Naive thymus-derived CD4-positive, alpha-beta T cell (primary cell): ENCODE measurements at regions of chr4 and their contacts with region 1.

Region 1: GRCh38 chr4:10461091-10461849 is 4.0 kb upstream of the ZNF518B start:
- DNase-seq: peak; percentile 52 to 90 (median 80)
- ATAC-seq: peak; percentile 89
- H3K4me3 ChIP-seq: peak overlapping the region; percentile 61
- H3K4me3 Mint-ChIP-seq: peak overlapping the region; percentile 77 to 92 (median 86)
- H3K27ac ChIP-seq: no peak overlapping the region
- H3K27ac Mint-ChIP-seq: peak overlapping the region in 4 of 9 donors; percentile 3 to 85 (median 45)
- H3K4me1 ChIP-seq: peaks cover 4 to 6% of the 10 kb centered on the region in 2 donors
- H3K4me1 Mint-ChIP-seq: peaks cover 14 to 38% (median 30%) of the 10 kb centered on the region in 7 donors
- H3K27me3 ChIP-seq: no peaks in the 10 kb centered on the region
- H3K27me3 Mint-ChIP-seq: peaks cover 21 to 43% (median 34%) of the 10 kb centered on the region in 5 donors

Region 2: DNA sequence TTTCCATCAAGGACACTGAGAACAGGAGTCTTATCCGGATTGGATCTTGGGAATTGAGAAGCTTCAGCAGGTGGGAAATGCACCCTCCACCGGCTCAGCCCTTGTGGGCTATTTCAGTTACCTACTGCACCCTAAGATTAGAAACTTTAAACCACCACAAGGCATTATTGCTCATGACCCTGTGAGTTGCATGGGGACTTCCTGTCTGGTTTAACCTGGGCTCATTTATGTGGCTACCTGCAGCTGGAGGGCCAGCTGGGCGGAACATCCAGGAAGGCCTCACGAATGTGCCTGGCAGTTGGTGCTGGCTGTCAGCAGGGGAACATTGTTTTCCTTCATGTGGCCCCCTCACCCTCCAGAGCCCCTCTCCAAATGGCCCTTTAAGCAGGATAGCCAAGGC is 853.0 kb before region 1 on chr4:
- CTCF ChIA-PET with region 1: no interaction called
- POLR2A ChIA-PET with region 1: no interaction called
- intact Hi-C with region 1: loop called (anchors 5 to 10 kb)
- DNase-seq: no peak
- ATAC-seq: no peak
- H3K4me3 ChIP-seq: no peak overlapping the region
- H3K4me3 Mint-ChIP-seq: no peak overlapping the region
- H3K27ac ChIP-seq: no peak overlapping the region
- H3K27ac Mint-ChIP-seq: no peak overlapping the region
- H3K4me1 ChIP-seq: peaks cover 8 to 9% of the 10 kb centered on the region in 2 donors
- H3K4me1 Mint-ChIP-seq: peaks cover 20 to 36% (median 29%) of the 10 kb centered on the region in 7 donors
- H3K27me3 ChIP-seq: no peaks in the 10 kb centered on the region
- H3K27me3 Mint-ChIP-seq: peaks cover 0 to 5% (median 0%) of the 10 kb centered on the region in 5 donors

Region 3: DNA sequence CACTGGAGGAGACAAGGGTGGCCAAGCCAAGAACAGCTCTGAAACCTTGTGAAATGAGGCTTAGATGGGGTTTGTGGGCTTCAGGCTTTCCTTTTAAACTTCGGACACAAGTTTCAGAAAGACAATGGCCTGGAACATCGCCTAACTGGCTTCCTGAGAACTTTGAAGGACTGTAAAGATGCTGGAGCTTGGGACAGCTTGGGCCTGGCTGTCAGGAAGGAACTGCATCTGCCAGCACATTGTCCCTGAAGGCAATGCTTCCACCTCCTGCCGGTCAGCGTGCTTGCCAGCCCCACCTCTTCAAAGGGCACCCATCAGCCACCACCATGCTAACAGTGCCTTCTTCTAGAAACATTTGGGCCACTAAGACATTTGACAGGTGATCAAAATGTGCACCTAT is 572.0 kb before region 1 on chr4:
- CTCF ChIA-PET with region 1: no interaction called
- POLR2A ChIA-PET with region 1: no interaction called
- intact Hi-C with region 1: no loop called
- DNase-seq: no peak
- ATAC-seq: no peak
- H3K4me3 ChIP-seq: no peak overlapping the region
- H3K4me3 Mint-ChIP-seq: no peak overlapping the region
- H3K27ac ChIP-seq: no peak overlapping the region
- H3K27ac Mint-ChIP-seq: no peak overlapping the region
- H3K4me1 ChIP-seq: no peaks in the 10 kb centered on the region
- H3K4me1 Mint-ChIP-seq: no peaks in the 10 kb centered on the region
- H3K27me3 ChIP-seq: no peaks in the 10 kb centered on the region
- H3K27me3 Mint-ChIP-seq: no peaks in the 10 kb centered on the region

Region 4: GRCh38 chr4:10096201-10096977 is 364.9 kb before region 1 on chr4:
- CTCF ChIA-PET with region 1: no interaction called
- POLR2A ChIA-PET with region 1: interaction called, 3 read pairs
- intact Hi-C with region 1: loop called in 1 of 2 experiments (anchors 5 kb)
- DNase-seq: peak; percentile 39 to 76 (median 69)
- ATAC-seq: peak; percentile 81
- H3K4me3 ChIP-seq: peak overlapping the region; percentile 21
- H3K4me3 Mint-ChIP-seq: peak overlapping the region in 9 of 10 donors; percentile 16 to 79 (median 55)
- H3K27ac ChIP-seq: peak overlapping the region; percentile 67
- H3K27ac Mint-ChIP-seq: peak overlapping the region; percentile 82 to 95 (median 90)
- H3K4me1 ChIP-seq: peaks cover 75 to 82% of the 10 kb centered on the region in 2 donors
- H3K4me1 Mint-ChIP-seq: peaks cover 66 to 100% (median 94%) of the 10 kb centered on the region in 7 donors
- H3K27me3 ChIP-seq: no peaks in the 10 kb centered on the region
- H3K27me3 Mint-ChIP-seq: no peaks in the 10 kb centered on the region

Region 5: DNA sequence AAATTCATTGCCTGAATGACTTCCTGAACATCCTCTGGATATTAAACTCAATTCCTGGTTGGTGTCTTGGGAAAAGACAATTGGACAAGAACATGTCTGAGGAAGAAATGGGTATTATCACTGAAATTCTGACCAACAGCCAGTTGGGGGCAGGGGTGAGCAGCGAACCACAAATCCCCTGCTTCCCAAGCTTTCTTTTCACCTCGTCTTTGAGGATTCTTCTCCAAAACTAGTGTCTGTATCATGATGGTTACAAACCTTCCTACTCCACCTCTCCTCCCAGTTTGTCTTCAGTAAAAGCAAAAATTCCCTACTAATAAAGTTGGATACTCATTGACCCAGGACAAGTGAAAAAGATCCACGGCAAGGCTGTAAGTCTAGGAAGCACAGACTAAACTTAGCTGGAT is 296.4 kb before region 1 on chr4:
- CTCF ChIA-PET with region 1: interaction called, 3 read pairs
- POLR2A ChIA-PET with region 1: interaction called, 3 read pairs
- intact Hi-C with region 1: loop called (anchors 2 kb)
- DNase-seq: no peak
- ATAC-seq: no peak
- H3K4me3 ChIP-seq: no peak overlapping the region
- H3K4me3 Mint-ChIP-seq: no peak overlapping the region
- H3K27ac ChIP-seq: no peak overlapping the region
- H3K27ac Mint-ChIP-seq: peak overlapping the region in 1 of 9 donors; percentile 62
- H3K4me1 ChIP-seq: peaks cover 8 to 30% of the 10 kb centered on the region in 2 donors
- H3K4me1 Mint-ChIP-seq: peaks cover 14 to 41% (median 32%) of the 10 kb centered on the region in 7 donors
- H3K27me3 ChIP-seq: no peaks in the 10 kb centered on the region
- H3K27me3 Mint-ChIP-seq: no peaks in the 10 kb centered on the region

Region 6: DNA sequence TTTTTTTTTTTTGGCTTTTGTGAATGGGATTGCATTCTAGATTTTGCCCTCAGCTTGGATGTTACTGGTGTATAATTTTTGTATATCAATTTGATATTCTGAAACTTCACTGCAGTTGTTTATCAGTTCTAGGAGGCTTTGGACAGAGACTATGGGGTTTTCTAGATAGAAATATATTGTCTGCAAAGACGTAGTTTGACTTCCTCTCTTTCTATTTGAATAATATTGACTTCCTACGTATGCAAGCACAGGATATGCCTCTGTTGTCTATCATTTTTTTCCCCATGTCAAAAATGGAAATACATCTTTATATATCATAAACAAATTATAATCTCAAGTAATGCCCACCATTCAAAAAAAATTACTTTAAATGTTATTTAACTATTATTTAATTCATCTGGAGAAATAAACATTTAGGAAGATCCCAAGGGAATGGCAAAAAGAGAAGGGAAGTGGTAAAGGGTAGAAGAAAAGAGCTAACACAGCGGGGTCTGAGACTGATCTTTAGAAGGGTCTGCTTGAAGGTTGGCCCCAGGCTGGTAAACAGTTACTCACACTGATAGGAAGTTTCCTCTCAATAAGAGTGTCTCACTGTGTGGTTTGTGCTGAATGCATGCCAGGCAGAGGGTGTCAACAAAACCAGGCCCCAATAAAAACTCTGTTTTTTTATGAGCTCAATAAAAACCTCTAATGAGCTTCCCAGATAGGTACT is 39.8 kb before region 1 on chr4:
- CTCF ChIA-PET with region 1: no interaction called
- POLR2A ChIA-PET with region 1: interaction called, 3 read pairs
- intact Hi-C with region 1: loop called in 1 of 2 experiments (anchors 5 kb)
- DNase-seq: peak in 1 of 9 donors; percentile 14
- ATAC-seq: no peak
- H3K4me3 ChIP-seq: no peak overlapping the region
- H3K4me3 Mint-ChIP-seq: peak overlapping the region in 2 of 10 donors; percentile 29 to 41
- H3K27ac ChIP-seq: no peak overlapping the region
- H3K27ac Mint-ChIP-seq: peak overlapping the region in 2 of 9 donors; percentile 74 to 79
- H3K4me1 ChIP-seq: peaks cover 0 to under 1% of the 10 kb centered on the region in 2 donors
- H3K4me1 Mint-ChIP-seq: peaks cover 2 to 9% (median 7%) of the 10 kb centered on the region in 7 donors
- H3K27me3 ChIP-seq: no peaks in the 10 kb centered on the region
- H3K27me3 Mint-ChIP-seq: peaks cover 0 to 4% (median 1%) of the 10 kb centered on the region in 5 donors

Region 7: GRCh38 chr4:10671366-10671765 is 210.1 kb after region 1 on chr4:
- CTCF ChIA-PET with region 1: no interaction called
- POLR2A ChIA-PET with region 1: no interaction called
- intact Hi-C with region 1: loop called in 1 of 2 experiments (anchors 10 kb)
- DNase-seq: peak in 8 of 9 donors; percentile 28 to 89 (median 80)
- ATAC-seq: peak; percentile 95
- H3K4me3 ChIP-seq: no peak overlapping the region
- H3K4me3 Mint-ChIP-seq: peak overlapping the region in 8 of 10 donors; percentile 27 to 67 (median 43)
- H3K27ac ChIP-seq: peak overlapping the region; percentile 74
- H3K27ac Mint-ChIP-seq: peak overlapping the region; percentile 81 to 94 (median 89)
- H3K4me1 ChIP-seq: peaks cover 0 to 27% of the 10 kb centered on the region in 2 donors
- H3K4me1 Mint-ChIP-seq: peaks cover 3 to 42% (median 29%) of the 10 kb centered on the region in 7 donors
- H3K27me3 ChIP-seq: no peaks in the 10 kb centered on the region
- H3K27me3 Mint-ChIP-seq: no peaks in the 10 kb centered on the region